A673 (cell line): ENCODE measurements at regions of chr2 and their contacts with region 1.

Region 1: GRCh38 chr2:229330952-229331351 is 59.9 kb upstream of the PID1 start:
- DNase-seq: no peak
- H3K4me3 ChIP-seq: no peak overlapping the region
- H3K27ac ChIP-seq: no peak overlapping the region
- H3K4me1 ChIP-seq: no peaks in the 10 kb centered on the region
- H3K27me3 ChIP-seq: no peaks in the 10 kb centered on the region
- CTCF ChIP-seq: no peak

Region 2: DNA sequence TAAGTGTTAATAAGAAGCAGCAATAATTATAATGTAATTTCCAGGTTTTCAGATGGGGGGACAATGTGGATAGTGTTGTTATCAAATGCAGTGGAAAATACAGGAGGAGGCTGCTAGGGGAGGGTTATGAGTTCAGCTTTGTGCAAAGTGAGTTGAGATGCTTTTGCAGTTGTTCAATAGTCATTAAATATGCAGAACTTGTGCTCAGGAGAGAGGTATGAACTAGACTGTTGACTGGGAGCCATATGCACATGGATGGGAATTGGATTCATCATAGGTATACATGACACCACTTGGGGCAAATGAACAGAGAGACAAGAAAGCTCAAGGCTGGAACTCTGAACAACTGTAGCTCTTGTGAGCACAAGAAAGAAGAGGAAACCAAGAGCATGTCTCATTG is 122.3 kb after region 1 on chr2:
- CTCF ChIA-PET with region 1: no interaction called
- POLR2A ChIA-PET with region 1: interaction called, 10 read pairs
- intact Hi-C with region 1: no loop called
- DNase-seq: no peak
- H3K4me3 ChIP-seq: no peak overlapping the region
- H3K27ac ChIP-seq: no peak overlapping the region
- H3K4me1 ChIP-seq: no peaks in the 10 kb centered on the region
- H3K27me3 ChIP-seq: no peaks in the 10 kb centered on the region
- CTCF ChIP-seq: no peak

Region 3: GRCh38 chr2:230124757-230125431 is 793.9 kb after region 1 on chr2:
- CTCF ChIA-PET with region 1: no interaction called
- POLR2A ChIA-PET with region 1: no interaction called
- intact Hi-C with region 1: no loop called
- DNase-seq: peak; percentile 27
- H3K4me3 ChIP-seq: no peak overlapping the region
- H3K27ac ChIP-seq: no peak overlapping the region
- H3K4me1 ChIP-seq: peaks cover 9% of the 10 kb centered on the region
- H3K27me3 ChIP-seq: no peaks in the 10 kb centered on the region
- CTCF ChIP-seq: no peak